Colonic mucosa (tissue), 4 donors: ENCODE measurements at regions of chr12 and their contacts with region 1.

Region 1: DNA sequence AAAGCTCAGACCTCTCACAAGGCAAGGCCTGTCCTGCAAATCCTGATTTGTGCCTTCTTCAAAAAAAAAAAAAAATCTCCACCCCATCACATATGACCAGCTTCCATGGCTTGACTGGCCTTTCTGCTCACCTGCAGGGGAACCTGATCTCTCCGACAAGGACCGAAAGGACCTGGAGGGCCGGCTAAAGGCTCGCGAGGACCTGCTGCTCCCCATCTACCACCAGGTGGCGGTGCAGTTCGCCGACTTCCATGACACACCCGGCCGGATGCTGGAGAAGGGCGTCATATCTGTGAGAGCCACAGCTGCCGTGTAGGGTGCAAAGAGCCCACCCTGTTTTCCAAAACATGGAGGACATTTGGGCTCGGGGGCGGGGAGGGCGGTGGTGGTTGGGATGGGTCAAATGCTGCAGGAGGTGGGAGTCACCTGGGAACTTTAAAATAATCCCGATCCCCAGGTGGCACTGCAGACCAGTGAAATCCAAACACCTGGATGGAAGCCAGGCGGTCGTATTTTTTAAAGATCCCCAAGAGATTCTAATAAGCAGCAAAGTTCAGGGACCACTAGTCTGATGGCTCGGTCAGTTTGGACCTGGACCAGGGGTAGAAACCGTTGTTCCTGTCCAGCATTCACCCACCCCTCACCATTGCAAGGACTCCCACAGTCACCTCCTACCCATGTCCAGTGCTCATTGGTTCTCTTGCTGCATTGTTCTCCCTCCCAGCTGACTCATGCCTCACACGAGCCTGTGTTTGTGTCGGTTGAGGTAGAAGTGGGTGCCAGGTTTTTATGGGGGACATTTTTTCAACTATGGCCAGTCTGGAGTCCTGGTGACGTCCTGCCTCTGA is 44.8 kb downstream of the FOXN4 start:
- DNase-seq: peak; percentile 85
- H3K4me3 ChIP-seq: no peak overlapping the region
- H3K27ac ChIP-seq: no peak overlapping the region
- H3K4me1 ChIP-seq: no peaks in the 10 kb centered on the region
- H3K27me3 ChIP-seq: no peaks in the 10 kb centered on the region
- CTCF ChIP-seq: peak; percentile 66

Region 2: GRCh38 chr12:109110988-109111495 is 153.3 kb before region 1 on chr12:
- intact Hi-C with region 1: loop called (anchors 10 kb)
- DNase-seq: peak; percentile 96
- H3K4me3 ChIP-seq: peak overlapping the region; percentile 53
- H3K27ac ChIP-seq: peak overlapping the region; percentile 90
- H3K4me1 ChIP-seq: peaks cover 7% of the 10 kb centered on the region
- H3K27me3 ChIP-seq: no peaks in the 10 kb centered on the region
- CTCF ChIP-seq: no peak

Region 3: DNA sequence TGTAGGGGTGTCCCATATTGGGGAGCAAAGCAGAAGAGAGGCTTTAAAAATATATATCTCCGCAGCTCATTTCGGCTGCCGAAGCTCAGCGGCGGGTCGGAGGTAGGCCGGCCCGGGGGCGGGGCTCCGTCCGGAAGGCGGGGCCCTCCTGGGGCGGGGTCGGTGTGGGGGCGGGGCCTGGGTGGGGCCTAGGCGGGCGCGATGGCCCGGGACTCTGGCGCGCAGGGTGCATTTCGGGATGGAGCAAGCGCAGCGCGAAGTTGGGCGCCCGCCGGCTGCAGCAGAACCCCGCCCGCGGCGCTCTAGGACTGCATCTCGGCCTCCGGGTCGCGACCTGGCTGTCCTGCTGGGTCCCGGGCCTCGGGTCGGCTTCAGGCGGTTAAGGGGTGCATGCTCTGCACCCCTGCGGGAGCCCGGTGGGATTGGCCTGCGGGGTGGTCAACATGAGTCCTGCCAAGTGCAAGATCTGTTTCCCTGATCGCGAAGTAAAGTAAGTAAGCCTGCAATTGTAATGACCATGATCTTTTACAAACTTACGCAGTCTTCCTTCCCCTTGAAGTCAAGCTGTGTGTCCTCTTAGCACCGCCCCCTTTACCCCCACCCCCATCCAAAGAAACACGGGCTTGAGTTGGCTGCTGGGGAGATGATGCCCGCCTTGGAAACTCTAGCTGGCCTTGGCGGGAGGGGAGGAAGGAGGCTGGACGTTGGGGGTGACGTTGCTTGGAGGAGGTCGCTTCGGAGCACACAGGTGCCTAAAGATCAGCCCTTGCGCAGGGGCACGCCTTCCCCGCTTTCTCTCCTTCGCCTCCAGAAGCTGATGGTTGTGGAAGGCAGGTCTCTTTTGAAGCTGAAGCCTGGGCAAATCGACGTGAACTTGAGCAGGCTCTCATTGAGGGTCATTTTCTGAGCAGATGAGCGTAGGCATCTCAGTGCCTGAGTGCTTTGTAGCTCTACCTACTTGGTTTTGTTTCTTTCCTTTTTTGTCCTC is 109.6 kb before region 1 on chr12:
- intact Hi-C with region 1: no loop called
- DNase-seq: peak; percentile 91
- H3K4me3 ChIP-seq: peak overlapping the region; percentile 39
- H3K27ac ChIP-seq: peak overlapping the region; percentile 48
- H3K4me1 ChIP-seq: peaks cover 5% of the 10 kb centered on the region
- H3K27me3 ChIP-seq: no peaks in the 10 kb centered on the region
- CTCF ChIP-seq: no peak

Region 4: GRCh38 chr12:109385339-109386067 is 121.2 kb after region 1 on chr12:
- intact Hi-C with region 1: loop called (anchors 2 kb)
- DNase-seq: no peak
- H3K4me3 ChIP-seq: no peak overlapping the region
- H3K27ac ChIP-seq: no peak overlapping the region
- H3K4me1 ChIP-seq: no peaks in the 10 kb centered on the region
- H3K27me3 ChIP-seq: no peaks in the 10 kb centered on the region
- CTCF ChIP-seq: peak; percentile 37